ENCODE measurements at regions of chr16 and their contacts with region 1.

Region 1: GRCh38 chr16:67372664-67373063 is 20.6 kb downstream of the TPPP3 start:
- DNase-seq: no peak
- H3K4me3 ChIP-seq: no peak overlapping the region
- H3K27ac ChIP-seq: no peak overlapping the region
- H3K27me3 ChIP-seq: no peaks in the 10 kb centered on the region
- CTCF ChIP-seq: peak; percentile 30 to 86 (median 66)

Region 2: DNA sequence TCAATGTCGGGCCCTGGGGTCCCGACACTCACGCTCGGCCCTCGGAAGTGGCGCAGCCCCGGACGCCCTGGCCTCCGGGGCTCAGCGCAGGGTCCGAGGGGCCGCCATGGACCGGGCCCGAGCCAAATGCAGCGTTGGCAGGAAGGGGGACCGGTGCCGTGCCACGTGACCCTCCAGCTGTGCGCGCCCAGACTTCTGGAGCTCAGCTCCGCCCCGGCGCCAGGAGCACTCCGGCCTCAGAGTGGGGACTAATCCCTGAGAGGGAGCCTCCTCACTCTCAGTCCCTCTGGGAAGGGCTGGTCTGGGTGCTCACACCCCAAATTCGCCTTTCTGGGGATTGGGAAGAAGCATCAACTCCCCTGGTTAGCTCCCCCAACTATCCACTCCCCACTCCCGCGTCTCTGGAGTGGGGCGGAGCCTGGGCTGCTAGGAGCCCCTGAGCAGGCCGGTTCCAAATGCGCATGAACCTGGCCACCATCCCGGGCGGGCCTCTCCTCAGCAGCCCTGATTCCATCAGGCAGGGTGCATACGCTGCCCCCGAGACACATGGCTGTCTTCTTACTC is 221.7 kb before region 1 on chr16 and contains the start of gene B3GNT9:
- intact Hi-C with region 1: no loop called
- DNase-seq: peak in 7 of 10 donors; percentile 33 to 80 (median 71)
- H3K4me3 ChIP-seq: peak within 1 kb of the TSS; percentile 43 to 80 (median 64)
- H3K27ac ChIP-seq: peak within 1 kb of the TSS in 57 of 59 donors; percentile 7 to 89 (median 73)
- H3K27me3 ChIP-seq: no peaks in the 10 kb centered on the region
- CTCF ChIP-seq: peak in 4 of 56 donors; percentile 2 to 22 (median 12)
- total RNA-seq, gene B3GNT9: 4.8 to 23.7 (median 10.6) TPM

Region 3: DNA sequence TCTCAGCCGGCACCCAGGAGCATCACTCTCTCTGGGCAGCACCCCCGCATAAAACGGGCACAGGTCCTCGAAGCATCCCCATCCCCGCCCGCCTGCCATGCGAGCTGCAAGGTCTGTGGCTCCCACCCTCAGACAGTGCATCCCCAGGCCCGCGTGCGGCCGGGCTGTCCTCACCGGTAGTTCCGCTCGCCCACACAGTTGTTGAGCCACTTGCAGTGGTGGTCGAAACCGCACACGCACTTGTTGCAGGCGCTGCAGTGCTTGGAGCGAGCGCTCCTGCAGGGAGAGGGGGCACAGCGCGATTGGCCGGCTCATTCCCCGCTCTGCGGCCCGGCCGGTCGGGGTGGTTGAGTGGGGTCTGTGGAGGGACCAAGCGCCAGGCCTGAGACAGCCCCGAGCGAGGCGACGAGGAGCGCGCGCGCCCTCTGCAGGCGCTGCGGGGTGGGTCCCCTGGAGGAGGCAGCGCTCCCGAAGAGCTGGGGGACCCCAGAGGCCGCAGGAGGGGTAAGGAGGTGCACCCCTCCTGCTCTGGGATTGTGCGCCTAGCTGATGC is 26.6 kb after region 1 on chr16:
- intact Hi-C with region 1: loop called in 1 of 2 experiments (anchors 1 kb)
- DNase-seq: peak in 3 of 10 donors; percentile 24 to 78 (median 32)
- H3K4me3 ChIP-seq: peak overlapping the region in 39 of 59 donors; percentile 2 to 53 (median 33)
- H3K27ac ChIP-seq: peak overlapping the region in 7 of 59 donors; percentile 6 to 68 (median 21)
- H3K27me3 ChIP-seq: peaks cover 0 to 3% (median 0%) of the 10 kb centered on the region in 45 donors
- CTCF ChIP-seq: peak; percentile 32 to 96 (median 86)

Region 4: DNA sequence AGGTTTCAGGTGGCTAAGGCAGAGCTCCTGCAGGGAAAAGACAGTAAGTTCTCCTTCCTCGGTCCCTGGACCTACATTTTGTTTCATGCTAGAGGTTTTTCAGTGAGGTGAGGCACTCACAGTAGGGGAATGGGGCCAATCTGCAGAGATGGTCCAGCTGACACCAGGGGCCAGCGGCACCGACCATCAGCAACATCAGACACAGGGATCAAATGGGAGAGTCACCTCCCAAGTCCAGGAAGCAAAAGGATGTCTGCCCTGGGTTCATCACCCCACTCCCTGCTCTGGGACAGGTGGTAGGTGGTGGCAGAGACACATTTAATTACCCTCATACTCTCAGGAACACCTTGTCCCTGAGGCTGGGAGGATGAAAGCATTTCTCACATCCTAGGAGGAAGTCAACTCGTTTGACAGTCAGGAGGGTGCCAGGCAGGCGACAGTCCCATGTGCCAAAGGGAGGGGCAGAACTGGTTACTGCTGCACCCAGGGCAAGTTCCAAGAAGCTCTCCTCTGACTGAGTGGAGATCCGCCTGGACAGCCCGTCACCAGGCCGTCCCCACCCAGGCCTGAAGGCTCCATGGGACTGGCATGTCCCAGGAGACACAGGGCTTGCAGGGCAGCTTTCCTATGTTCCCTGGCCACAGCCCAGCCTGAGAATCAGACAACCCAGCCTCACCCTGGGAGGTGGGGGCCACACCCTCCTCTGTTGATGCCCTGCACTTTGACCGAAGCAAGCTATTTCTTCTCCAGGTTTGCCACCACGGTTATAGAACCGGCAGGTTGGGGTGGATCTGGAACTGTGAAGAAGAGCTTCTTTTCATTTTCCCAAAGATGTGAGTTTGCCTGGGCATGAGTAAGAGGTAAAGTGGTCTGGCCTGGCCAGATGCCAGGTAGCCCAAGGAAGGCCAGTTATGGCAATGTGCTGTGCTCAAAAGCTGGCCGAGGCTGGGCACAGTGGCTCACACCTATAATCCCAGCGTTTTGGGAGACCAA is 89.2 kb after region 1 on chr16:
- intact Hi-C with region 1: loop called in 1 of 2 experiments (anchors 10 kb)
- DNase-seq: no peak
- H3K4me3 ChIP-seq: no peak overlapping the region
- H3K27ac ChIP-seq: no peak overlapping the region
- H3K27me3 ChIP-seq: no peaks in the 10 kb centered on the region
- CTCF ChIP-seq: no peak